Activated B cell treated with CpG ODN at 0.5 μM for 24 hours (primary cell): ENCODE measurements at regions of chr12 and their contacts with region 1.

Region 1: DNA sequence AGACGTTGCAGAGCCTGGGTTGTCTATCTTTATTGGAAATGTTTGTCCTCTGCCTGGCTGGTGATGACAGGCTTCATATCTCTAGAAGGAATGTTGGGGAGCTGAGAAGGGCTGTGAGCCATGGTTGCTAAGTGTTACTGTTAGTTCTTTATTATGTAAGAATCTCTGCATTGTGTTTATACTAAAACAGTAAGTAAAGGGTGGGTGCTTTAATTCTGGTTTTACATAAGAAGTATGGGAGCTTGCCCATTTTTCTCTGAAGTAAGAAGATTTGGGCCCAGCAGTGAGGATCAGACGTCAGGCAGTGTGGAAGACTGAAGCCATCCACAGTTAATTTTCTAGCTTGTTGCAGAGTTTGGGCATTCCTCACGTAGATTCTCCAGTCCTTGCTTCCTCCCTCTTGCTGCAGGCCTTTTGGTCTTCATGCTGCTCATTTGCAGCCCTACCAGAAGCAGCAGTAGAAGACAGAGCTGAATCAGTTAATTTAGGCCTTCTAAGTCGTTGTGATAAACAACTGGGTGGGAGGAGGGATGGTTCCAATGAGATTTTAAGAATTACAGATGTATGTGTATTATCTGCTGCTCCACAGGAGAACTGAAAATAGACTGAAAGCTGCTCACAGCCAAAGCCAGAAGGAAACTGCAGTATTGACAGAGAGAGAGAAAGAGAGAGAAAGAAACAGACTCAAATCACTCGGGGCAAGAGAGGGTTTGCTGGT is 21.4 kb downstream of the WNT5B start:
- DNase-seq: no peak
- ATAC-seq: no peak
- H3K4me3 Mint-ChIP-seq: no peak overlapping the region
- H3K27ac Mint-ChIP-seq: no peak overlapping the region
- H3K4me1 Mint-ChIP-seq: peaks cover 18% of the 10 kb centered on the region
- H3K27me3 Mint-ChIP-seq: peaks cover 16% of the 10 kb centered on the region
- CTCF ChIP-seq: no peak

Region 2: DNA sequence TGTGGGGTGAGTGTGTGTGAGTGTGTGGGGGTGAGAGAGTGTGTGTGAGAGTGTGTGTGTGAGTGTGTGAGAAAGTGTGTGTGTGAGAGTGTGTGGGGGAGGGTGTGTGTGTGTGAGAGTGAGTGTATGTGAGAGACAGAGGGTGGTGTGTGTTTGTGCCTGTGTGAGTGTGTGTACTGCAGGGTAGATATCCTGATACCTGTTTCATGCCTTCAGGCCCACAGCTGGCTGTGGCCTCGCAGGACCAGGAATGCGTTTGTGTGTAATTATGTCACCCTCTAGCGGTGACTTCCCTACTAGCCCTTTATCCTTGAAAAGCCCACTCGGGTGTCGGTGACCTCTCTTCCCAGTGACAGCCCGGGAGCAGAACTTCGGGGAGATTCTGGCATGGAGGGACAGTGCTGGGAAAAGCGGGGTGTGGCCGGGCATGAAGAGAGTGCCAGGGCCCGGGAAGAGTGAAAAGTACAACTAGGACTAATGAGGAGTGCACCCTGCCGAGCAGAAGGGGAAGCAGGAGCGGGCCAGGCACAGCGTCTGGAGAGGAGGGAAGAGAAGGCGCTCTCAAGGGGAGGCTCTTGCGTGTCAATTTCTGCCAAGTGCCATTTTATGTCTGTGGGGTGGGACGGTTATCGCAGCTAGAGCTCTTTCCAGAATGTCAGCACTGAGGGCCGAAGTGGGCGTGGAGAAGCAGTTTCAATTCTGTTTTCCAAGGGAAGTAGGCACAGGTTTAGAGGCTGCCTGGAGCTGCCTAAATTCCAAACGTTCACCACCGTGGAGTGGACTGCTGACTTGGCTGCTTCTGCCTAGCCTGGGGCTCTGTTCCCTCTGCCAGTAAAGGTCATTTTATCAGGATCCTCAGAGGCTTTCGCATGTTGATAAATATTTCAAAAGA is 45.0 kb before region 1 on chr12:
- CTCF ChIA-PET with region 1: no interaction called
- POLR2A ChIA-PET with region 1: interaction called, 12 read pairs
- intact Hi-C with region 1: no loop called
- DNase-seq: peak; percentile 31
- ATAC-seq: peak; percentile 55
- H3K4me3 Mint-ChIP-seq: peak overlapping the region; percentile 91
- H3K27ac Mint-ChIP-seq: peak overlapping the region; percentile 78
- H3K4me1 Mint-ChIP-seq: peaks cover 44% of the 10 kb centered on the region
- H3K27me3 Mint-ChIP-seq: no peaks in the 10 kb centered on the region
- CTCF ChIP-seq: no peak